ENCODE measurements at regions of chr6 and their contacts with region 1.

Region 1: DNA sequence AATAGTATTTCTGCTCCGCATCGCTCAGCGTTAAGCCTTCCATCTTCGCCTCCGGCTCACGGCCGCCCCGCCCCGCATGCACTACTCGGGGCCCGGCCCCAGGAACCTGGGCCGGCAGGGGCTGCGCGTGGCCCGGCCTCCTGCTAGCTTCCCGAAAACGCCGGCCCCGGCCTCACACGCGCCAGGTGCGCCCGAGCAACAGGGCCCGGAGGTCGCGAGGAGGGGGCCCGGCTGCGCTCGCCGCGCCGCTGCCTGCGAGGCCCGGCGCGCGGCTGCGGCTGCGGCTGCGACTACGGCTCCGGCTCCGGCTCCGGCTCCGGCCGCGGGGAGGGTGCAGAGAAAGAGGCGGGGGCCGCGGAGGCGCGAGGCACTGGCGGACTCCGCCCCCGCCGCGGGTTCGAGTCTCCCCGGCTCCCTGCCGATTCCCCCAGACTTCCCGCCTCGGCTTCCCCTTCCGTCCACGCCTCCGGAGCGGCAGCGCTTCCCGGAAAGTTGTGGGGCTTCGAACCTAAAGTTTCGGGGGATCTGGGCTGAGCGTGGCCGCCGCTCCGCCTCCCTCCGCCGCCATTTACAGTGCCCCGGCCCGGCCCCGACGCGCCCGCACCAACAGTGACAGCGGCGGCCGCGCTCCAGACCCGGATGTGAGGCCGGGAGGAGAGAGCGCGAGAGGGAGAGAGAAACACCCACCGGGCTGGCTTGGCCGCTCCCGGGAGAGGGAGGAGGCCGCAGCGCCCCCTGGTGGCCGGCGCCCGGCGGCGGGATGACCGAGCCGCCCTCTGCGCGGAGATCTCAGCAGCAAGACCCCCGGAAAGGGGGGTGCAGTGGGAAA is at the start of gene REPS1:
- DNase-seq: peak; percentile 94
- ATAC-seq: peak; percentile 96
- H3K4me3 Mint-ChIP-seq: peak within 1 kb of the TSS; percentile 81
- H3K27ac Mint-ChIP-seq: peak within 1 kb of the TSS; percentile 92
- H3K4me1 Mint-ChIP-seq: peaks cover 8% of the 10 kb centered on the region
- H3K27me3 Mint-ChIP-seq: no peaks in the 10 kb centered on the region
- CTCF ChIP-seq: peak; percentile 98
- total RNA-seq, gene REPS1: 44.9 to 46.6 TPM

Region 2: GRCh38 chr6:138817822-138818308 is 170.0 kb before region 1 on chr6:
- CTCF ChIA-PET with region 1: interaction called, 17 read pairs
- POLR2A ChIA-PET with region 1: interaction called, 3 read pairs
- intact Hi-C with region 1: loop called (anchors 5 kb)
- DNase-seq: peak; percentile 64
- ATAC-seq: peak; percentile 86
- H3K4me3 Mint-ChIP-seq: peak overlapping the region; percentile 20
- H3K27ac Mint-ChIP-seq: peak overlapping the region; percentile 83
- H3K4me1 Mint-ChIP-seq: peaks cover 29% of the 10 kb centered on the region
- H3K27me3 Mint-ChIP-seq: peaks cover 1% of the 10 kb centered on the region
- CTCF ChIP-seq: no peak

Region 3: GRCh38 chr6:138882369-138883017 is 105.4 kb before region 1 on chr6:
- CTCF ChIA-PET with region 1: no interaction called
- POLR2A ChIA-PET with region 1: no interaction called
- intact Hi-C with region 1: no loop called
- DNase-seq: no peak
- ATAC-seq: no peak
- H3K4me3 Mint-ChIP-seq: no peak overlapping the region
- H3K27ac Mint-ChIP-seq: no peak overlapping the region
- H3K4me1 Mint-ChIP-seq: no peaks in the 10 kb centered on the region
- H3K27me3 Mint-ChIP-seq: no peaks in the 10 kb centered on the region
- CTCF ChIP-seq: no peak

Region 4: GRCh38 chr6:138945354-138945753 is 42.5 kb before region 1 on chr6:
- CTCF ChIA-PET with region 1: interaction called, 5 read pairs
- POLR2A ChIA-PET with region 1: interaction called, 3 read pairs
- intact Hi-C with region 1: loop called (anchors 5 kb)
- DNase-seq: peak; percentile 19
- ATAC-seq: no peak
- H3K4me3 Mint-ChIP-seq: no peak overlapping the region
- H3K27ac Mint-ChIP-seq: no peak overlapping the region
- H3K4me1 Mint-ChIP-seq: peaks cover 47% of the 10 kb centered on the region
- H3K27me3 Mint-ChIP-seq: no peaks in the 10 kb centered on the region
- CTCF ChIP-seq: peak; percentile 30

Region 5: GRCh38 chr6:138973466-138974153 is 14.2 kb before region 1 on chr6:
- CTCF ChIA-PET with region 1: interaction called, 16 read pairs
- POLR2A ChIA-PET with region 1: interaction called, 6 read pairs
- intact Hi-C with region 1: no loop called
- DNase-seq: no peak
- ATAC-seq: no peak
- H3K4me3 Mint-ChIP-seq: no peak overlapping the region
- H3K27ac Mint-ChIP-seq: no peak overlapping the region
- H3K4me1 Mint-ChIP-seq: peaks cover 70% of the 10 kb centered on the region
- H3K27me3 Mint-ChIP-seq: no peaks in the 10 kb centered on the region
- CTCF ChIP-seq: no peak

Measured in activated CD8-positive, alpha-beta T cell treated with anti-CD3 and anti-CD28 coated beads for 36 hours (primary cell).